ENCODE measurements at regions of chr19 and their contacts with region 1.

Region 1: DNA sequence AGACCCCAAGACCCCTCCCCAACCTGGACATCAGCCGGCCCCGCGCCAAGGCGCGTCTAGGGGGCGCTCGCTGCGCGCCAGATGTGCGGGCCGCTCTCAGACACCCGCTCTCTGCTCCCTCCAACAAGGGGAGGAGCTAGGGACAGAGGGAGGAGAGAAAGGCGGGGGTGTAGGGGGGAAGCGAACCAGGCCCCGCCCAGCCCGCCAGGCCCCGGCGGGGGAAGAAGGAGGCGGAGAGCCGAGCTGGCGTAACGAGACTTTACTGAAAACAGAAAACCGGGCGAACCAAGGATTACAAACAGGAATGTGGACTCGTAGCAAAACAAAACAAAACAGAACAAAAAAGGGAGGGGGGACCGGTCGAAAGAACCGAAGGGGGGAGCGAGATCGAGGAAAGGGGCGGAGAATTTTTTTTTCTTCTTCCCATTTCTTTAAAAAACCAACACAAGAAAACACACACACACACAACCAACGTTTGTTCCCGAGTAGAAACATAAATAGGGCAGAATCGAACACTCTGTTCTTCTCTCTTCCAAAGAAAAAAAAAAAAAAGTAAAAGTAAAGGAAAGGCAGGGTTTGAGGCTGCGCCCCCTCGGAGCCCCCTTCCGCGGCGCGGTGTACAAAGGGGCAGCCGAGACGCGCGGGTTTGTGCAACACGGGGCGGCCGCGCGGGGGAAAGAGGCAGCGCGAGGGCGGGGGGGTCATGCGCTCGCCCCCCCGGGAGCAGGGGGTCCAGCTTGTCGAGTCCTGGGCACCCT is 1.7 kb downstream of the JUND start:
- DNase-seq: peak; percentile 95
- H3K4me3 ChIP-seq: peak overlapping the region; percentile 99
- H3K27ac ChIP-seq: peak overlapping the region; percentile 99 to 100
- H3K4me1 ChIP-seq: peaks cover 22% of the 10 kb centered on the region
- H3K27me3 ChIP-seq: no peaks in the 10 kb centered on the region
- CTCF ChIP-seq: peak; percentile 62 to 98 (median 89)
- POLR2A ChIP-seq: peak; percentile 97

Region 2: GRCh38 chr19:18322759-18323460 is 43.2 kb after region 1 on chr19 and contains the start of gene LSM4:
- intact Hi-C with region 1: loop called (anchors 1 kb)
- DNase-seq: peak; percentile 98
- H3K4me3 ChIP-seq: peak within 1 kb of the TSS; percentile 54 to 71
- H3K27ac ChIP-seq: peak within 1 kb of the TSS; percentile 90
- H3K4me1 ChIP-seq: peaks cover 14% of the 10 kb centered on the region
- H3K27me3 ChIP-seq: no peaks in the 10 kb centered on the region
- CTCF ChIP-seq: peak in 2 of 4 experiments; percentile 32 to 39
- POLR2A ChIP-seq: peak; percentile 85
- total RNA-seq, gene LSM4: 157 to 215 TPM

Region 3: GRCh38 chr19:18328340-18329034 is 48.8 kb after region 1 on chr19:
- intact Hi-C with region 1: loop called (anchors 1 kb)
- DNase-seq: peak; percentile 95
- H3K4me3 ChIP-seq: peak overlapping the region in 1 of 2 donors; percentile 3
- H3K27ac ChIP-seq: peak overlapping the region; percentile 60 to 63
- H3K4me1 ChIP-seq: peaks cover 1% of the 10 kb centered on the region
- H3K27me3 ChIP-seq: no peaks in the 10 kb centered on the region
- CTCF ChIP-seq: peak; percentile 97 to 100 (median 98)
- POLR2A ChIP-seq: peak; percentile 77

Region 4: DNA sequence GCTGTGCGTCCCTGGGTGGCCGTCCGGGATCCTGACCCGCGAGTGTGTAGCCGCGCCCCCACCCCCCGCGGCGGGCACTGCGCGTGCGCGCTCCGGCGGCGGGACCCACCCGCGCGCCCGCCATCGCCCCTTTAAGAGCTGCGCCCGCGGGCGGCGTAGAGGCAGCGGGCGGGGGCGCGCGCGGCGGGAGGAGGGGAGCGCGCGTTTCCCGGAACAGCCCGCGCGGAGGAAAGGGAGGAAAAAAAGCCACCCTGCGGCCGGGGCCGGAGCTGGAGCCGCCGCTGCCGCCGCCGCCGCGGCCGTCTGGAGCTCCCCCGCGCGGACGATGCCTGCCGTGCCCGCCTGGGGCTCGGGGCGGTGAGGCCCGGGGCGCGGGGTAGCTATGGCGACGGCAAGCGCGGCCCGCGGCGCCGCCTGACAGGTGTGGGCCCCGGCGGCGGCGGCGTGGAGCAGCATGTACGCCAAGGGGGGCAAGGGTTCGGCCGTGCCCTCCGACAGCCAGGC is 139.6 kb after region 1 on chr19 and contains the start of gene SSBP4:
- intact Hi-C with region 1: loop called (anchors 5 kb)
- DNase-seq: peak; percentile 54
- H3K4me3 ChIP-seq: peak within 1 kb of the TSS; percentile 59 to 75
- H3K27ac ChIP-seq: peak within 1 kb of the TSS; percentile 77 to 82
- H3K4me1 ChIP-seq: peaks cover 14% of the 10 kb centered on the region
- H3K27me3 ChIP-seq: no peaks in the 10 kb centered on the region
- CTCF ChIP-seq: peak in 3 of 4 experiments; percentile 21 to 67 (median 62)
- POLR2A ChIP-seq: no peak
- total RNA-seq, gene SSBP4: 71.5 to 120 TPM